ENCODE measurements at regions of chr12 and their contacts with region 1.

Region 1: GRCh38 chr12:43882578-43883178 is 46.8 kb downstream of the TMEM117 start:
- DNase-seq: peak; percentile 60
- ATAC-seq: peak; percentile 61
- H3K4me3 ChIP-seq: no peak overlapping the region
- H3K4me3 Mint-ChIP-seq: no peak overlapping the region
- H3K27ac ChIP-seq: no peak overlapping the region
- H3K27ac Mint-ChIP-seq: no peak overlapping the region
- H3K4me1 ChIP-seq: no peaks in the 10 kb centered on the region
- H3K4me1 Mint-ChIP-seq: no peaks in the 10 kb centered on the region
- H3K27me3 ChIP-seq: no peaks in the 10 kb centered on the region
- H3K27me3 Mint-ChIP-seq: no peaks in the 10 kb centered on the region
- CTCF ChIP-seq: peak; percentile 94

Region 2: GRCh38 chr12:43338848-43339526 is 543.7 kb before region 1 on chr12:
- CTCF ChIA-PET with region 1: no interaction called
- POLR2A ChIA-PET with region 1: no interaction called
- intact Hi-C with region 1: loop called (anchors 2 kb)
- DNase-seq: no peak
- ATAC-seq: no peak
- H3K4me3 ChIP-seq: no peak overlapping the region
- H3K4me3 Mint-ChIP-seq: no peak overlapping the region
- H3K27ac ChIP-seq: no peak overlapping the region
- H3K27ac Mint-ChIP-seq: no peak overlapping the region
- H3K4me1 ChIP-seq: peaks cover 0 to 3% of the 10 kb centered on the region in 2 donors
- H3K4me1 Mint-ChIP-seq: peaks cover 2% of the 10 kb centered on the region
- H3K27me3 ChIP-seq: no peaks in the 10 kb centered on the region
- H3K27me3 Mint-ChIP-seq: no peaks in the 10 kb centered on the region
- CTCF ChIP-seq: no peak

Region 3: GRCh38 chr12:43444940-43445564 is 437.6 kb before region 1 on chr12:
- CTCF ChIA-PET with region 1: interaction called, 75 read pairs
- POLR2A ChIA-PET with region 1: no interaction called
- intact Hi-C with region 1: no loop called
- DNase-seq: peak; percentile 44
- ATAC-seq: no peak
- H3K4me3 ChIP-seq: no peak overlapping the region
- H3K4me3 Mint-ChIP-seq: no peak overlapping the region
- H3K27ac ChIP-seq: no peak overlapping the region
- H3K27ac Mint-ChIP-seq: no peak overlapping the region
- H3K4me1 ChIP-seq: no peaks in the 10 kb centered on the region
- H3K4me1 Mint-ChIP-seq: no peaks in the 10 kb centered on the region
- H3K27me3 ChIP-seq: no peaks in the 10 kb centered on the region
- H3K27me3 Mint-ChIP-seq: no peaks in the 10 kb centered on the region
- CTCF ChIP-seq: peak; percentile 88

Region 4: DNA sequence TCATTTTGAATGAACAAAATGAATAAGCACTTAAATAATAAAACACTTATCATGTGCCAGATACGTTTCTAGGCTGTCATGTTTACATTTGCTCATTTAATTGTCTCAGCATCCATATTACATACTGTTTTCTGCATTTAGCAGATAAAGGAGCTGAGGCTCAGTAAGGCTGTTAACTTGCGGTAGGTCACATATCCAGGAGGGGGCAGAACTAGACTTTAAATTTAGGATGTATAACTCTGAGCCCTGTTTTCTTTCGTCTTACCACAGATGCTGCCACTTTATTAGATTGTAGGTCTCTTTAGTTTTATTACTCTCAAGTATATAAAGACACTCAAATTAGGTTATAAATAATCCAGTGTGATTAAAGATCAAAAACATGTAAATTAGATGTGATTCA is 106.2 kb before region 1 on chr12:
- CTCF ChIA-PET with region 1: interaction called, 65 read pairs
- POLR2A ChIA-PET with region 1: no interaction called
- intact Hi-C with region 1: no loop called
- DNase-seq: peak; percentile 41
- ATAC-seq: peak; percentile 43
- H3K4me3 ChIP-seq: no peak overlapping the region
- H3K4me3 Mint-ChIP-seq: no peak overlapping the region
- H3K27ac ChIP-seq: no peak overlapping the region
- H3K27ac Mint-ChIP-seq: no peak overlapping the region
- H3K4me1 ChIP-seq: no peaks in the 10 kb centered on the region
- H3K4me1 Mint-ChIP-seq: no peaks in the 10 kb centered on the region
- H3K27me3 ChIP-seq: no peaks in the 10 kb centered on the region
- H3K27me3 Mint-ChIP-seq: no peaks in the 10 kb centered on the region
- CTCF ChIP-seq: peak; percentile 52

Region 5: DNA sequence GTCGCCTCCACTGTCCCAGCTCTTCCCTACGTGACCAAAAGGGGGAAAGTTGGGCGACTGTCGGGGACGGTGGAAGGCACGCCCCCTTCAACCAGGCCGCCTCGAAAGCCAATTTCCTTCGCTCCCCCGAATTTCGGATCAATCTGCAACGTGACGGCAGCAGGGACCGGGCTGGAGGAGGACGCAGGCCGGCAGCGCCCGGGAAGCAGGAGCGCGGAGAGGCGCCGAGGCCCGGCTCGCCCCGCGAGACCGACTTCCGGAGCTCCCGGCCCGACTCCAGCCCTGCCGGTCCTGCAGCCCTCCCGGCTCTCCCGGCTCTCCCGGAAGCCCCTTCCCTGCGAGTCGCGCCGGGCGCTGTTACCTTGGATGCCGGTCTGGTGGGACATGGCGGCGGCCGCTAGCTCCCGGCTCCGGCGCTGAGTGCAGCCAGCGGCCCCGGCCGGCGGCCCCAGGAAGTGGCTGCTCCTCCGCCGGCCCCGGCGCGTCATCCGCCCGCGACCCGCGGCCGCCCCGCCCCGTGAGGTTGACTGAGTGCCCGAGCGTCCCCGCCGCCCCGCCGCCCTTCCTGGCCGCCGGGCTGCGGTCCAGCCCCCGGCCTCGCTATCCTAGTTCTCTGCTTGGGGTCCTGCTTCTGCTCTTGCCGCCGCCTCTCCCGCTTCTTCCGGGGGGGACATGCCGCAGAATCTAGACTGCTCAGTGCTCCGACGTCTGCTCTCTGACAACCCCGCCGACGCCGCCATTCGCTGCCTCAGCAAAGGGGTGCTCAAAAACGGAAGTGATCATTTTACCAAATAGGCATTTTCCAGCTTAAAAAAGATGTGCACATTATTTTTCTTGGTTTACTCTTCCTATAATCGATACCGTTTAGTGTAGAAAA is 76.6 kb before region 1 on chr12 and contains the start of gene TWF1:
- CTCF ChIA-PET with region 1: interaction called, 14 read pairs
- POLR2A ChIA-PET with region 1: interaction called, 3 read pairs
- intact Hi-C with region 1: no loop called
- DNase-seq: peak; percentile 93
- ATAC-seq: peak; percentile 95
- H3K4me3 ChIP-seq: peak within 1 kb of the TSS; percentile 78 to 94 (median 85)
- H3K4me3 Mint-ChIP-seq: peak within 1 kb of the TSS; percentile 99
- H3K27ac ChIP-seq: peak within 1 kb of the TSS; percentile 87 to 96
- H3K27ac Mint-ChIP-seq: peak within 1 kb of the TSS; percentile 100
- H3K4me1 ChIP-seq: peaks cover 11 to 28% of the 10 kb centered on the region in 2 donors
- H3K4me1 Mint-ChIP-seq: peaks cover 24% of the 10 kb centered on the region
- H3K27me3 ChIP-seq: no peaks in the 10 kb centered on the region
- H3K27me3 Mint-ChIP-seq: no peaks in the 10 kb centered on the region
- CTCF ChIP-seq: peak; percentile 31
- total RNA-seq, gene TWF1: 30.0 and 34.3 TPM in 2 replicates

Region 6: DNA sequence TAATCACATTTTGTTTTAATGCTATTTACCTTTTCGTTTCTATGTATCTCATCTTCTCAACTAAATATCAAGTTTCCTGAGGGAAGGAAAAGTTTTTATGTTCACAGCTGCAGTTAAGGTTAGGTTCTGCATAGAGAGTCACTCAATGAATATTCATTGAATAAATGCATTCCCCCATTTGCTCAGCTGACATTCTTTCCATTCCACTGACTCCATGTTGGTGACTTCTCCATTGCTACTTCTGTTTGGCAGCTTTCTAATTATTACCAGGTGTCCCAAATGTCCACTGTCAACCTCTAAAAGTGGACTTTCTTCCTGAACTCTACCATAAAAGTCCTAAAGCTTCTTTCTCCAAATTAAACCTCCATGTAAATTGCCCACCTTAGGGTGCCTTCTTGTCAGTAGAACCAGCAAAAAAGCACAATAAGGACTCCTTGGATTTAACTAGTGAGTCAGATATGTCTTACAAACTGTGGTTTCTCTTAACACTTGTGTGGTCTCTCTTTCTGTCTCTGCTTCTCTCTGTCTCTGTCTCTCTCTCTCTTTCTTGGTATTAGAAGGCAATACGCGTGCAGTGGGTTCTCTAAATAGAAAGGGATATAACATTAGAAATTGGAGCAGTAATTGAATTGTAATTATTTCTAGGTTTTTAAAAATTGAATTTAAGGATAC is 39.1 kb after region 1 on chr12:
- CTCF ChIA-PET with region 1: no interaction called
- POLR2A ChIA-PET with region 1: no interaction called
- intact Hi-C with region 1: no loop called
- DNase-seq: no peak
- ATAC-seq: no peak
- H3K4me3 ChIP-seq: no peak overlapping the region
- H3K4me3 Mint-ChIP-seq: no peak overlapping the region
- H3K27ac ChIP-seq: no peak overlapping the region
- H3K27ac Mint-ChIP-seq: no peak overlapping the region
- H3K4me1 ChIP-seq: no peaks in the 10 kb centered on the region
- H3K4me1 Mint-ChIP-seq: no peaks in the 10 kb centered on the region
- H3K27me3 ChIP-seq: no peaks in the 10 kb centered on the region
- H3K27me3 Mint-ChIP-seq: no peaks in the 10 kb centered on the region
- CTCF ChIP-seq: no peak